Activated B cell treated with CpG ODN at 0.5 μM for 24 hours (primary cell): ENCODE measurements at regions of chr18 and their contacts with region 1.

Region 1: DNA sequence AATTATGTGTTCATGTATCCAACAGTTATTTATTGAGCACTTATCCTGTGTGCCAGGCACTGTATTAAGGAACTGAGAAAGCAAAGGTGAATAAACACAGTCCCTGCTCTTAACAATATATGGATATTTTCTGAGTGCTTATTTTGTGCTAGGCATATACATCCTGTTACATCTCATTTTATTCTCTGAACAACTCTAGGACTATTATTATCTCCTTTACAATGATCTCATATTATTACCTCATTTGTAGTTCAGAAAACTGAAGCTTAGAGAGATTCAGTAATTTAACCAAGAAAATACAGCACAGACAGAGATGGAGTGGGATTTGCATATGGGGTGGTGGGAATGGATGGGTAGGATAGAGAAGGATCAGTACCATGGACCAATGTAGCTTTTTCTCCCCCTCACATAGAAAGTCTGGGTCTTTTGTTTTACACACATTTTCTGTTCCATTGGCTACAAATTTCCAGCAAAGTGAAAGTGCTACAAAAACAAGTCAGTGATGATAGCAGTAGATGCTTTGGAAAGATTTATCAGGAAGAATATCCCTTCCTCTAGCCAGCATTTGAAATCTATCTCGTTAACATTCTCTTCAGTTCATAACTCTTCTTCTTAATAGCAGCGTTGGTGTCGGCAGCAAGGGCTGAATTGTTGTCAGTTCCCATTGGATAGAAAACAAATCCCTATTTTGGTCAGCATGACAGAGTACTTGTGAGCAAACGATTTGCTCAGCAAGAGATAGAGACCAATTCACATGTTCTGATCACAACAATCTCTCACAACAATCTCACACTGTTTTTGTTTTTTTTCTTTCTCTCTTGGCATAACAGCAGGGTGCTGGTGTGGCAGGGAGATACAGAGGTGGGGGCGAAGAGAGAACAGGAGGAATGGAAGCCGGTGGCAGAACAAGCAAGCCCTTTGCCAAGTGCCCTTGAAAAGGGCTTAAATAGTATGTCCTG is 102.2 kb upstream of the KCTD1 start:
- DNase-seq: no peak
- ATAC-seq: no peak
- H3K4me3 Mint-ChIP-seq: no peak overlapping the region
- H3K27ac Mint-ChIP-seq: no peak overlapping the region
- H3K4me1 Mint-ChIP-seq: peaks cover 4% of the 10 kb centered on the region
- H3K27me3 Mint-ChIP-seq: peaks cover 42% of the 10 kb centered on the region
- CTCF ChIP-seq: no peak

Region 2: DNA sequence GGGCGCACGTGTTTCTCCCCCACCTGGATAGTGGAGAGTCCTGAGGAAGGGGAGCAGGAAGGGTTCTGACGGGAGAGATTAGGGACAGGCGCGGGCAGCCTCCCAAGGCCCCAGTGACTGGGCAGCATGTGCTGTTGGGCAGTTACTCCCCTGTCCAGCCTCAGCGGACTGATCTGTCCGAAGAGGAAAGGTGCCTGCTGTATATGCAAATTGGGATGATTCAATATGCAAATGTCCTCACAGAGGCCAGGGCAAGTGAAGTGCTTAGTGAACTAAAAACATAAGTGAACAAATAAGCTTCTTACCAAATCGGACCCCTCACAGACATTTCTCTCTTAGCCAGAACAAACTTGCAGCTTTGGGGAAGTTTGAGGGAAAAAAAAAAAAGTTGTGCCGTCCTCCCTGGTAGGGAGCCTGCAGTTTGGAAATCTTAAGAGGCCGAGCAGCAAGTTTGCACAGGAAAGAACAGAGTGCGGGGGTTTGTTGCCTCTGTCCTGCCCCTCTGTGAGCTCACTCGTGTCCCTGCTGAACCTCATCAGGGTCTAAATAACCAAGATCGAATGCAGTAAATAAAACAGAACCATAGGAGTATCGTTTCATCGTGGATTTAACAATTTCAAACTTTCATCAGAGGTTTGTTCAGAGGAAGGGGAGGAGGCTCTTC is 243.6 kb before region 1 on chr18:
- CTCF ChIA-PET with region 1: interaction called, 4 read pairs
- POLR2A ChIA-PET with region 1: no interaction called
- intact Hi-C with region 1: loop called (anchors 1 kb)
- DNase-seq: no peak
- ATAC-seq: no peak
- H3K4me3 Mint-ChIP-seq: no peak overlapping the region
- H3K27ac Mint-ChIP-seq: no peak overlapping the region
- H3K4me1 Mint-ChIP-seq: peaks cover 11% of the 10 kb centered on the region
- H3K27me3 Mint-ChIP-seq: no peaks in the 10 kb centered on the region
- CTCF ChIP-seq: no peak

Region 3: DNA sequence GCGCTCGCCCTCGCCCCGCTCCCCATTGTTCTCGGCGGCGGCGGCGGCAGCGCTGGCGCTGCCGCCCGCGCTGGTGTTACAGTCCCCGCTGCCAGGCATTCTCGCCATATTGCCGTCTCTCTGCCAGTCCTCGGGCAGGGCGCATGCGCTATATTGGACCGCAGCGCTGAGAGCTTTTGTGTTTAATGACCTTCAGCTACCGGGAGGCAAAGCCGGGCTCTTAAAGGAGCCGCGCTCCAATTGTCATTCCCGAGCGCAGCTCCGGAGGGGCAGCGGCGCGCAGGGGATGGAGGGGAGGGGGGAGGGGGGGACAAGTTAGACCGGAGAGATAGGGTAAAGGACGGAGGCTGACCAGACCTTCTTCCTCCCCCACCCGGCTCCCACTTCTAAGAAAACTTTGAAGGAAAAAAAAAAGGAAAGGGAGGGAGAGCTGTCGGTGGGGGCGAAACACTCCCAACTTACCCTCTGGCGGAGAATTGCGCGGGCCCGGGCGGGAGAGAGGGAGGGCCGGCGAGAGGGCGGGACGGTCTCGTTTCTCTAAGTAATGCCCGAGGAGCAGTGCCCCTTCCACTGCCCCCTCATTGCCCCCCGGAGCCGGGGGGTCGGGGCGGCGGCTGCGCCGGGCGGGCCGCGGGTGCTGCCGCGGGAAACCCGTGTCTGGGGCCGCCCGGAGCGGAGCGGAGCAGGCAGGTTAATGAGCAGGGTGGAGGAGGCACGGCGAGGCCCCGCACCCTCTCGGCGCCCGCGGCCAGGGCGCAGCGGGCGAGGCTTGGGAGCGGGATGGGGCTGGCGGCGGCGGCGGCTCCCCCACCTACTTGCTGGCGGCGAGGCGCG is 101.9 kb before region 1 on chr18 and contains the start of gene KCTD1:
- CTCF ChIA-PET with region 1: no interaction called
- POLR2A ChIA-PET with region 1: no interaction called
- intact Hi-C with region 1: loop called (anchors 5 kb)
- DNase-seq: peak; percentile 56
- ATAC-seq: peak; percentile 73
- H3K4me3 Mint-ChIP-seq: peak within 1 kb of the TSS; percentile 89
- H3K27ac Mint-ChIP-seq: no peak within 1 kb of the TSS
- H3K4me1 Mint-ChIP-seq: peaks cover 47% of the 10 kb centered on the region
- H3K27me3 Mint-ChIP-seq: peaks cover 21% of the 10 kb centered on the region
- CTCF ChIP-seq: no peak
- total RNA-seq, gene KCTD1: 3.7 and 4.9 TPM in 2 replicates

Region 4: GRCh38 chr18:26863122-26863879 is 212.7 kb after region 1 on chr18:
- CTCF ChIA-PET with region 1: no interaction called
- POLR2A ChIA-PET with region 1: no interaction called
- intact Hi-C with region 1: no loop called
- DNase-seq: no peak
- ATAC-seq: no peak
- H3K4me3 Mint-ChIP-seq: no peak overlapping the region
- H3K27ac Mint-ChIP-seq: no peak overlapping the region
- H3K4me1 Mint-ChIP-seq: no peaks in the 10 kb centered on the region
- H3K27me3 Mint-ChIP-seq: peaks cover 26% of the 10 kb centered on the region
- CTCF ChIP-seq: no peak